ENCODE measurements at regions of chrX and their contacts with region 1.

Region 1: GRCh38 chrX:18674788-18675735 is 3.2 kb upstream of the RS1 start:
- DNase-seq: peak; percentile 90
- ATAC-seq: peak; percentile 84
- H3K4me3 ChIP-seq: peak overlapping the region; percentile 57 to 86 (median 72)
- H3K4me3 Mint-ChIP-seq: peak overlapping the region; percentile 84
- H3K27ac ChIP-seq: peak overlapping the region; percentile 78 to 84
- H3K27ac Mint-ChIP-seq: peak overlapping the region; percentile 96
- H3K4me1 ChIP-seq: no peaks in the 10 kb centered on the region
- H3K4me1 Mint-ChIP-seq: peaks cover 10% of the 10 kb centered on the region
- H3K27me3 ChIP-seq: no peaks in the 10 kb centered on the region
- H3K27me3 Mint-ChIP-seq: no peaks in the 10 kb centered on the region
- CTCF ChIP-seq: no peak

Region 2: DNA sequence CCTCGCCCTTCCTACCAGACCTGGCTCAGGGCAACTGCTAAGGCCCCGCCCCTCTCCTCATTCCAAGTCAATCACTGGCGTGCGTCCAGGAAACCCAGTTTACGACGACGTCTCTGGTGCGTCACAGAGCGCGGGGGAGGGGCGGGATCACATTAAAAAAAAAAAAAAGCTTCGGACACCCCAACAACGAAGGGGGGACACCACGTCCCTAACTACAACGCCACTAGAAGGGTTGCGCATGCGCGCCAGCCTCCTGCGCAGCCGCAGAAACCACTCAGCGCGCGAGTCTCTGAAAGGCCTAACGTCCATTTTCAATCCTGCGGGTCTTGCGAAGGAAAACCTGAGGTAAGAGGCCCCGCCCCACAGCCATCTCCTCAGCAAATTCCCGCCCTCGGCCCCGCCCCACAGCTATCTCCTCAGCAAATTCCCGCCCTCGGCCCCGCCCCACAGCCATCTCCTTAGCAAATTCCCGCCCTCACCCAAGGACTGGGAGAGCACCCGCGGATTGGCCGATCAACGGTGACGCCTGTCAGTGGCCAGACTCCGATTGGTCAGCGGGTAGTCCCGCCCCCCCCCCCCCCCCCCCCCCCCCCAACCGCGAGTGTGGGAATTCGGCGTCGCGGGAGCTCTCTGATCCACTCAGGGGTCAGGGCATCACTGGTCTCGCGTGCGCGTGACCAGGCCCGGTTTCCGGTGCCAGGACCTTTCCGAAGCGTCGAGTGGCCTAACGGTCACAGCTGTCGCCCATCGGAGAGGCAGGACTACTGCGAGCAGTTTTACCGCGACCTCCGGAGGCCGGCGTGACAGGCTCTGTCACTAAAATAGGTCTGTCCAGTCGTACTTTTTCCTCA is 938.0 kb before region 1 on chrX and contains the start of gene SCML1:
- CTCF ChIA-PET with region 1: no interaction called
- POLR2A ChIA-PET with region 1: no interaction called
- intact Hi-C with region 1: loop called (anchors 10 kb)
- DNase-seq: peak; percentile 90
- ATAC-seq: peak; percentile 88
- H3K4me3 ChIP-seq: peak within 1 kb of the TSS; percentile 45 to 73 (median 65)
- H3K4me3 Mint-ChIP-seq: peak within 1 kb of the TSS; percentile 90
- H3K27ac ChIP-seq: peak within 1 kb of the TSS; percentile 75 to 81
- H3K27ac Mint-ChIP-seq: peak within 1 kb of the TSS; percentile 85
- H3K4me1 ChIP-seq: peaks cover 6 to 12% of the 10 kb centered on the region in 2 donors
- H3K4me1 Mint-ChIP-seq: peaks cover 16% of the 10 kb centered on the region
- H3K27me3 ChIP-seq: no peaks in the 10 kb centered on the region
- H3K27me3 Mint-ChIP-seq: peaks cover 6% of the 10 kb centered on the region
- CTCF ChIP-seq: no peak
- total RNA-seq, gene SCML1: 6.7 and 8.3 TPM in 2 replicates

Region 3: DNA sequence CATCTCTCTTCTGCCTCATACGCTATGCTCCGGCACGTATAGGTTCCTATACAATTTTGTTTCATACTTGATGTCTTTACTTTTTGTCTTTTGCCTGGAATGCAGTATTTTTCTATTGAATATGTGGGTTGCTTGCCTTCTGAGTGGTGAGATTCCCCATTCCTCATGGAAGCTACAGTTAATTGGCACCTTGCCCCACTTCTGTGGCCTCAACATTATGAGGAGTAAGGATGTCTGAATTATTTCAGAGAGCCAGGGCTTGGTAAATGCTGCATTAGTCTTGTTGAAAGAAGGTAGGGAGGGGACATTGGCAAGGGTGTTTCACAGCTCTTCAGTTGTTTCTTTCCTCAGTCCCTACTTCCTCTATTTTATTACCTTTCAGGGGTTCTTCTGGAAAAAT is 226.6 kb before region 1 on chrX:
- CTCF ChIA-PET with region 1: no interaction called
- POLR2A ChIA-PET with region 1: no interaction called
- intact Hi-C with region 1: no loop called
- DNase-seq: no peak
- ATAC-seq: no peak
- H3K4me3 ChIP-seq: no peak overlapping the region
- H3K4me3 Mint-ChIP-seq: no peak overlapping the region
- H3K27ac ChIP-seq: no peak overlapping the region
- H3K27ac Mint-ChIP-seq: no peak overlapping the region
- H3K4me1 ChIP-seq: no peaks in the 10 kb centered on the region
- H3K4me1 Mint-ChIP-seq: no peaks in the 10 kb centered on the region
- H3K27me3 ChIP-seq: no peaks in the 10 kb centered on the region
- H3K27me3 Mint-ChIP-seq: no peaks in the 10 kb centered on the region
- CTCF ChIP-seq: no peak

Region 4: GRCh38 chrX:18886344-18887161 is 211.5 kb after region 1 on chrX:
- CTCF ChIA-PET with region 1: no interaction called
- POLR2A ChIA-PET with region 1: no interaction called
- intact Hi-C with region 1: loop called (anchors 2 kb)
- DNase-seq: peak; percentile 69
- ATAC-seq: peak; percentile 83
- H3K4me3 ChIP-seq: peak overlapping the region; percentile 49 to 65 (median 58)
- H3K4me3 Mint-ChIP-seq: peak overlapping the region; percentile 95
- H3K27ac ChIP-seq: peak overlapping the region; percentile 59 to 75
- H3K27ac Mint-ChIP-seq: peak overlapping the region; percentile 97
- H3K4me1 ChIP-seq: peaks cover 14 to 20% of the 10 kb centered on the region in 2 donors
- H3K4me1 Mint-ChIP-seq: peaks cover 24% of the 10 kb centered on the region
- H3K27me3 ChIP-seq: no peaks in the 10 kb centered on the region
- H3K27me3 Mint-ChIP-seq: no peaks in the 10 kb centered on the region
- CTCF ChIP-seq: peak; percentile 60

Region 5: DNA sequence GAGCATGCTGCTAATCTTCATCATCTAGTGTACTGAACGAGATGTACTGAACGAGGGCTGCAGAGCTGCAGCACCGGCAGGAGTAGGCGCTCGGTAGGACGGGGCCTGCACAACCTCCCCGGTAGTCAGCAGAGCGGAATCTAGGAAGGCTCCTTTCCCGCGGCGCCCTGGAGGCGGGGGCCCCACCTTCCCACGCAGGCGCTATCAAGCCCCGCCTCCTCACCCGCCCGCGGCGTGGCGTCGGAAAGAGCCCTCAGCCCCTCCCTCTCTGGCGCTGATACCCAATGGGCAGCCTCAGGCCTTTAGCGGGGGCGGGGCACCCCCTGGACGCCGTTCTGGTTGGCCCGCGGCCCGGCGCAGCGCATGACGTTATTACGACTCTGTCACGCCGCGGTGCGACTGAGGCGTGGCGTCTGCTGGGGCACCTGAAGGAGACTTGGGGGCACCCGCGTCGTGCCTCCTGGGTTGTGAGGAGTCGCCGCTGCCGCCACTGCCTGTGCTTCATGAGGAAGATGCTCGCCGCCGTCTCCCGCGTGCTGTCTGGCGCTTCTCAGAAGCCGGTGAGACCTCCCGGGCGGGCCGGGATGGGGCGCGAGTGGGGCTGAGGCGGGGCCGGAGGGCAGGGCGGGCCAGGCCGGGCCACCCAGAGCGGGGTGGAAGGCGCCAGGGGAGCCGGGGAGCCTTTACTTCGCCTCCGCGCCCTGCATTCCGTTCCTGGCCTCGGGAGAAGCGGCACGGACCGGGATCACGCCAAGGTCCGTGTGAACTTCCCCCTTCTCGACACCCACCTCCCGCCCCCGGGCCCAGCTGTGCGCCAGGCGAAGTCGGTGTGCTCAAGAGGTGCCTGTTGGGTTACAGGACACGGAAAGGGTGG is 668.7 kb after region 1 on chrX and contains the start of gene PDHA1:
- CTCF ChIA-PET with region 1: no interaction called
- POLR2A ChIA-PET with region 1: no interaction called
- intact Hi-C with region 1: loop called (anchors 10 kb)
- DNase-seq: peak; percentile 93
- ATAC-seq: peak; percentile 98
- H3K4me3 ChIP-seq: peak within 1 kb of the TSS; percentile 31 to 76 (median 63)
- H3K4me3 Mint-ChIP-seq: peak within 1 kb of the TSS; percentile 92
- H3K27ac ChIP-seq: peak within 1 kb of the TSS; percentile 59 to 94
- H3K27ac Mint-ChIP-seq: peak within 1 kb of the TSS; percentile 90
- H3K4me1 ChIP-seq: peaks cover 8 to 16% of the 10 kb centered on the region in 2 donors
- H3K4me1 Mint-ChIP-seq: peaks cover 17% of the 10 kb centered on the region
- H3K27me3 ChIP-seq: no peaks in the 10 kb centered on the region
- H3K27me3 Mint-ChIP-seq: no peaks in the 10 kb centered on the region
- CTCF ChIP-seq: no peak
- total RNA-seq, gene PDHA1: 106 and 115 TPM in 2 replicates

Region 6: DNA sequence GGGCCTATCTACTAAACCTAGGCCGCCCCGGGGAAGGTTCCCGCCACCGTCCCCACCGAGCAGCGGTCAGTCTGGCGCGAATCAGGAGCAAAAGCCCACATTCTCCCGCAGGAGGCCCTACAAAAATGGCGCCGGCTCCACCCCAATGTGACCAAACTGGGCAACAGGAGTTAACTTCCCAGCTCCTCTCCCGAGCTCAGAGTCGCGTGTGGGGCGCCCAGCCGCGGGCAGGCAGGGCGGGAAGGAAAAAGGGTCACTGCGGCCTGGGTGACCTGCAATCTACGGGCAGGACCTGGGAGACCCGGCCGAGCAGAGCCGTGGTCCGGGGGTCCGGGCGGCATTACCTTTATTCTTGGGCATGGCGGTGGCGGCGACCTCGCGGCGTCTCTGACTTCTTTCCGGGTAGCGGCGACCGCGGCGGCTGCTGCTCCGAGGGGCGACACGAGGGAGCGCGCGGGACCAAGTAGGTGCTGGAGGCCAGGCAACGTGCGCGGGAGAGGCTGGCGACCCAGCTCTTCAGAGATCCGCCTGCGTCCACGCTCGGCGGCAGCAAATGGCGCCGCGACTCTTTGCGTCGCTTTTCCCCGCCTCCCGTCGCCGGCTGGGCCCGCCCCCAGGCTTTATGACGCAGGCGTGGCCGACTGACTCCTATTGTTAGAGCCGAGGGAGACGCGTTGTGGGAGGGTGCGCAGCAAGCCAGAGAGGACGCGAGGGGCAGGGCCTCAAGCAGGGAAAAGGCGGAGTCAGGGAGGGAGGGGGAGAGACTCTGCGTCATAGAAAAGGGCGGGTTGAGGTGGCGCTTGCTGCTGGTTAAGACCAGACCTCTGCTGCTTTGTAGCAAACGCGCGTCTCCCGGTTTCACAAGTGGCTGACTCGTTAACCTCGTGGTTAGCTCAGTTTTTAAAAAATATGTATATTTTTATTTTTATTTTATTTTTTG is 1466.5 kb after region 1 on chrX and contains the start of gene EIF1AX:
- CTCF ChIA-PET with region 1: no interaction called
- POLR2A ChIA-PET with region 1: no interaction called
- intact Hi-C with region 1: loop called (anchors 5 kb)
- DNase-seq: peak; percentile 96
- ATAC-seq: peak; percentile 99
- H3K4me3 ChIP-seq: peak within 1 kb of the TSS; percentile 77 to 98 (median 86)
- H3K4me3 Mint-ChIP-seq: peak within 1 kb of the TSS; percentile 87
- H3K27ac ChIP-seq: peak within 1 kb of the TSS; percentile 74 to 92
- H3K27ac Mint-ChIP-seq: peak within 1 kb of the TSS; percentile 88
- H3K4me1 ChIP-seq: peaks cover 15 to 16% of the 10 kb centered on the region in 2 donors
- H3K4me1 Mint-ChIP-seq: peaks cover 21% of the 10 kb centered on the region
- H3K27me3 ChIP-seq: no peaks in the 10 kb centered on the region
- H3K27me3 Mint-ChIP-seq: no peaks in the 10 kb centered on the region
- CTCF ChIP-seq: no peak
- total RNA-seq, gene EIF1AX: 39.3 and 42.7 TPM in 2 replicates